Natural killer cell (primary cell): ENCODE measurements at regions of chr12 and their contacts with region 1.

Region 1: GRCh38 chr12:90366286-90366685 is 588.7 kb downstream of the CCER1 start:
- DNase-seq: no peak
- ATAC-seq: no peak
- H3K4me3 ChIP-seq: no peak overlapping the region
- H3K4me3 Mint-ChIP-seq: no peak overlapping the region
- H3K27ac ChIP-seq: no peak overlapping the region
- H3K27ac Mint-ChIP-seq: no peak overlapping the region
- H3K4me1 ChIP-seq: no peaks in the 10 kb centered on the region
- H3K4me1 Mint-ChIP-seq: no peaks in the 10 kb centered on the region
- H3K27me3 ChIP-seq: no peaks in the 10 kb centered on the region
- H3K27me3 Mint-ChIP-seq: no peaks in the 10 kb centered on the region
- CTCF ChIP-seq: no peak

Region 2: GRCh38 chr12:90235642-90236041 is 130.6 kb before region 1 on chr12:
- intact Hi-C with region 1: no loop called
- DNase-seq: no peak
- ATAC-seq: no peak
- H3K4me3 ChIP-seq: no peak overlapping the region
- H3K4me3 Mint-ChIP-seq: no peak overlapping the region
- H3K27ac ChIP-seq: no peak overlapping the region
- H3K27ac Mint-ChIP-seq: no peak overlapping the region
- H3K4me1 ChIP-seq: no peaks in the 10 kb centered on the region
- H3K4me1 Mint-ChIP-seq: no peaks in the 10 kb centered on the region
- H3K27me3 ChIP-seq: no peaks in the 10 kb centered on the region
- H3K27me3 Mint-ChIP-seq: peaks cover 7 to 20% of the 10 kb centered on the region in 2 donors
- CTCF ChIP-seq: no peak

Region 3: GRCh38 chr12:90305379-90305778 is 60.9 kb before region 1 on chr12:
- intact Hi-C with region 1: loop called (anchors 2 kb)
- DNase-seq: no peak
- ATAC-seq: no peak
- H3K4me3 ChIP-seq: no peak overlapping the region
- H3K4me3 Mint-ChIP-seq: no peak overlapping the region
- H3K27ac ChIP-seq: no peak overlapping the region
- H3K27ac Mint-ChIP-seq: no peak overlapping the region
- H3K4me1 ChIP-seq: no peaks in the 10 kb centered on the region
- H3K4me1 Mint-ChIP-seq: no peaks in the 10 kb centered on the region
- H3K27me3 ChIP-seq: no peaks in the 10 kb centered on the region
- H3K27me3 Mint-ChIP-seq: peaks cover 0 to 4% of the 10 kb centered on the region in 2 donors
- CTCF ChIP-seq: no peak

Region 4: GRCh38 chr12:90449611-90450010 is 83.3 kb after region 1 on chr12:
- intact Hi-C with region 1: no loop called
- DNase-seq: no peak
- ATAC-seq: no peak
- H3K4me3 ChIP-seq: no peak overlapping the region
- H3K4me3 Mint-ChIP-seq: no peak overlapping the region
- H3K27ac ChIP-seq: no peak overlapping the region
- H3K27ac Mint-ChIP-seq: no peak overlapping the region
- H3K4me1 ChIP-seq: no peaks in the 10 kb centered on the region
- H3K4me1 Mint-ChIP-seq: no peaks in the 10 kb centered on the region
- H3K27me3 ChIP-seq: no peaks in the 10 kb centered on the region
- H3K27me3 Mint-ChIP-seq: no peaks in the 10 kb centered on the region
- CTCF ChIP-seq: no peak

Region 5: DNA sequence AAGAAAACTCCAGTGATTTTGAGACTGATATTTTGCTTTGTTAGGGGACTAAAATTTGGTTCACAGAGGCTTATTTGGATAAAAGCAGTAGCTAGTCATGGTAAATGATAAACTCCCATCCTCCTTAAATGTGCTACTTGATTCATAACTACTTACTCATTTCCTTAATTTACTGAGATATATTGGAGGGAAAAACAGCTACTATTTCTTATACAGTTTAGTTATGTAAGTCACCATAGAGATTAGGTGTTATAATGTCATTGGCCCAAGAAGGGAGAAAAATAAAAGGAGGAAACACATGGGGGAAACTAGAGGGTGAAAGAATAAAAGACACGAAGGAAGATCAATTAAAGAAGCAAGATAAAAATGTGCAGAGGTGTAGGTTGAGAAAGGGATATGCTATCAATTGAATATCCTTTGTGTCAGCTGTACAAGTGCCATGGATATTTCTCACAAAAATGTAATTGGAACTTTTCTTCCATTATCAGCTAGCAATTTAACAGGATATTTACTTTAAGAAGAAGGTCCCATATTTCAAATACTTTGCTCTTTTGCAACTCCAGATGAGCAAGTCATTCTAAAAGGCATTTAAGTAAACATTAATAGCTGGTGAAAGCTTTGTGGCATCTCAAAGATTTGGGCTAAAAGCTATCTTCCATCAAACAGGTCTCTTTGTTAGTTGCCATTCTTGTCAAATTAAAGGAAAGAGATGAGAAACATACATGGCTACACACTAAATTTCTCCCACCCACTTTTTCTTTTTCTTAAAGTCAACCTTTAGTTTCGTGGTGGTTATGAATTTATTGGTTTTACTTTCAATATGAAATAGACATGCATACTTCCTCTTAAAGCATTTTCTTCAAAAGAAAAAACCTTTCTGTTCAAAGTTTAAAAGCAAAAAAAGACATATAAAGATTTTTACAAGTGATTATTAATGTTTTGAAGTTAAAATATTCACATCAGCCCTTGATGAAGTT is 149.2 kb after region 1 on chr12:
- intact Hi-C with region 1: no loop called
- DNase-seq: no peak
- ATAC-seq: no peak
- H3K4me3 ChIP-seq: no peak overlapping the region
- H3K4me3 Mint-ChIP-seq: no peak overlapping the region
- H3K27ac ChIP-seq: no peak overlapping the region
- H3K27ac Mint-ChIP-seq: no peak overlapping the region
- H3K4me1 ChIP-seq: no peaks in the 10 kb centered on the region
- H3K4me1 Mint-ChIP-seq: no peaks in the 10 kb centered on the region
- H3K27me3 ChIP-seq: no peaks in the 10 kb centered on the region
- H3K27me3 Mint-ChIP-seq: no peaks in the 10 kb centered on the region
- CTCF ChIP-seq: no peak

Region 6: GRCh38 chr12:90712671-90713070 is 346.4 kb after region 1 on chr12:
- intact Hi-C with region 1: no loop called
- DNase-seq: no peak
- ATAC-seq: no peak
- H3K4me3 ChIP-seq: no peak overlapping the region
- H3K4me3 Mint-ChIP-seq: no peak overlapping the region
- H3K27ac ChIP-seq: no peak overlapping the region
- H3K27ac Mint-ChIP-seq: no peak overlapping the region
- H3K4me1 ChIP-seq: no peaks in the 10 kb centered on the region
- H3K4me1 Mint-ChIP-seq: no peaks in the 10 kb centered on the region
- H3K27me3 ChIP-seq: no peaks in the 10 kb centered on the region
- H3K27me3 Mint-ChIP-seq: no peaks in the 10 kb centered on the region
- CTCF ChIP-seq: no peak